HepG2 (cell line): ENCODE measurements at regions of chr17 and their contacts with region 1.

Region 1: GRCh38 chr17:60392042-60392844 is at the start of gene USP32:
- DNase-seq: peak; percentile 96
- ATAC-seq: peak; percentile 92
- H3K4me3 ChIP-seq: peak within 1 kb of the TSS; percentile 90 to 100 (median 90)
- H3K27ac ChIP-seq: peak within 1 kb of the TSS; percentile 95
- H3K4me1 ChIP-seq: peaks cover 42% of the 10 kb centered on the region
- H3K27me3 ChIP-seq: no peaks in the 10 kb centered on the region; a peak in 1 of 5 replicates
- CTCF ChIP-seq: peak; percentile 47
- EP300 ChIP-seq: peak in 1 of 2 experiments; percentile 66; a peak in 3 of 4 replicates
- POLR2A ChIP-seq: peak; percentile 77 to 83
- RAD21 ChIP-seq: peak; percentile 63; the same call in 1 of the 2 replicates
- total RNA-seq, gene USP32: 39.9 and 52.9 TPM in 2 replicates

Region 2: DNA sequence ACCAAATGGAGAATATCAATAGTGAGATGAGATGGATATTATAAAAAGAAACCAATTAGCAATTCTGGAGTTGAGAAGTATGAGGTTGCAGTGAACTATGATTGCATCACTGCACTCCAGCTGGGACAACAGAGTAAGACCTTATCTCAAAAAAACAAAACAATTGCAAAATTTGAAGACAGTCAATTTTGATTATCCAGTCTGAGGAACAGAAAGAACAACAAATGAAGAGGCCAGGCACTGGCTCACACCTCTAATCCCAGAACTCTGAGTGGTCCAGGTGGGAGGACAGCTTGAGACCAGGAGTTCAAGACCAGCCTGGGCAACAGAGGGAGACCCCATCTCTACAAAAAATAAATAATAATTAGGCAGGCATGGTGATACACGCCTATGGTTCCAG is 35.3 kb before region 1 on chr17:
- CTCF ChIA-PET with region 1: no interaction called
- POLR2A ChIA-PET with region 1: interaction called, 15 read pairs
- in situ Hi-C with region 1: no loop called
- intact Hi-C with region 1: loop called (anchors 2 kb)
- DNase-seq: no peak
- ATAC-seq: no peak
- H3K4me3 ChIP-seq: no peak overlapping the region
- H3K27ac ChIP-seq: no peak overlapping the region
- H3K4me1 ChIP-seq: peaks cover 37% of the 10 kb centered on the region
- H3K27me3 ChIP-seq: no peaks in the 10 kb centered on the region
- CTCF ChIP-seq: no peak
- EP300 ChIP-seq: no peak
- POLR2A ChIP-seq: no peak
- RAD21 ChIP-seq: no peak

Region 3: DNA sequence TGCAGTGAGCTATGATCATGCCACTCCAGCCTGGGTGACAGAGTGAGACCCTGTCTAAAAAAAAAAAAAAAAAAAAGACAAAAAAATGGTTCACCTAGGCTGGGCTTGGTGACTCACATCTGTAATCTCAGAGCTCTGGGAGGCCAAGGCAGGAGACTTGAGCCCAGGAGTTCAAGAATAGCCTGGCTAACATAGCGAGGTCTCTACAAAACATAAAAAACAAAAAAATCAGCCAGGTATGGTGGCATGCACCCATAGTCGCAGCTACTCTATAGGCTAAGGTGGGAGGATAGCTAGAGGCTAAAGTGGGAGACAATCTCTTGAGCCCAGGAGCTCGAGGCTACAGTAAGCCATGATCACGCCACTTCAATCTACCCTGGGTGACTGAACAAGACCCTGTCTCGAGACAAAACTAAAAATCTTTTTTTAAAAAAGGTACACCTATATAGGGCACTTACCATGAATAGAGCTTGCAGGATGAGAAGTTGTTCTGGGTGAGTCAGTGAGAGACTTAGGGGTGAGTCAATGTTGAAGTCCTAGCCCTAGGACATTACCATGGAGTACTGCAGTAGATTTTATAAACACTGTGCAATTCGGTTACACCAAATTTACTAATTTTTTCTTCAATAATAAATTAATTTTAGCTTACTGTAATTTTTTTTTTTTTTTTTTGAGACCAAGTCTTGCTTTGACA is 19.3 kb before region 1 on chr17:
- CTCF ChIA-PET with region 1: no interaction called
- POLR2A ChIA-PET with region 1: interaction called, 14 read pairs
- in situ Hi-C with region 1: no loop called
- intact Hi-C with region 1: no loop called
- DNase-seq: no peak
- ATAC-seq: peak; percentile 62
- H3K4me3 ChIP-seq: no peak overlapping the region
- H3K27ac ChIP-seq: no peak overlapping the region
- H3K4me1 ChIP-seq: peaks cover 19% of the 10 kb centered on the region
- H3K27me3 ChIP-seq: no peaks in the 10 kb centered on the region
- CTCF ChIP-seq: no peak
- EP300 ChIP-seq: no peak
- POLR2A ChIP-seq: no peak
- RAD21 ChIP-seq: no peak

Region 4: DNA sequence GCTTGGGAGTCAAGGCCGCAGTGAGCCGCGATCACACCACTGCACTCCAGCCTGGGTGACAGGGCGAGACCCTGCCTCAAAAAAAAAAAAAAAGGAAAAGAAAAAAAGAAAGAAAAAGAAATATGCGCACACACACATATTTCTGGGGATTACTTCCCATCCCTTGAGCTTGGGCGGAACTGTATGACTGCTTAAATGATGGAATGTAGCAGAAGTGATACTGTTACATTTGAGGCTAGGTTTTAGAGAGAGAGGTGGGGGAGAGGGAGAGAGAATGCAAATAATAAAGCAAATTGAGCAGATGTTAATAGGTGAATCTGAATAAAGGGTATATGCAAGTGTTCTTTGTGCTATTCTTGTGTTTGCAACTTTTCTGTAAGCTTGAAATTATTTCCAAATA is 11.7 kb after region 1 on chr17:
- CTCF ChIA-PET with region 1: no interaction called
- POLR2A ChIA-PET with region 1: interaction called, 30 read pairs
- in situ Hi-C with region 1: no loop called
- intact Hi-C with region 1: no loop called
- DNase-seq: no peak
- ATAC-seq: no peak
- H3K4me3 ChIP-seq: no peak overlapping the region
- H3K27ac ChIP-seq: no peak overlapping the region
- H3K4me1 ChIP-seq: peaks cover 30% of the 10 kb centered on the region
- H3K27me3 ChIP-seq: no peaks in the 10 kb centered on the region
- CTCF ChIP-seq: no peak
- EP300 ChIP-seq: no peak
- POLR2A ChIP-seq: no peak
- RAD21 ChIP-seq: no peak

Region 5: DNA sequence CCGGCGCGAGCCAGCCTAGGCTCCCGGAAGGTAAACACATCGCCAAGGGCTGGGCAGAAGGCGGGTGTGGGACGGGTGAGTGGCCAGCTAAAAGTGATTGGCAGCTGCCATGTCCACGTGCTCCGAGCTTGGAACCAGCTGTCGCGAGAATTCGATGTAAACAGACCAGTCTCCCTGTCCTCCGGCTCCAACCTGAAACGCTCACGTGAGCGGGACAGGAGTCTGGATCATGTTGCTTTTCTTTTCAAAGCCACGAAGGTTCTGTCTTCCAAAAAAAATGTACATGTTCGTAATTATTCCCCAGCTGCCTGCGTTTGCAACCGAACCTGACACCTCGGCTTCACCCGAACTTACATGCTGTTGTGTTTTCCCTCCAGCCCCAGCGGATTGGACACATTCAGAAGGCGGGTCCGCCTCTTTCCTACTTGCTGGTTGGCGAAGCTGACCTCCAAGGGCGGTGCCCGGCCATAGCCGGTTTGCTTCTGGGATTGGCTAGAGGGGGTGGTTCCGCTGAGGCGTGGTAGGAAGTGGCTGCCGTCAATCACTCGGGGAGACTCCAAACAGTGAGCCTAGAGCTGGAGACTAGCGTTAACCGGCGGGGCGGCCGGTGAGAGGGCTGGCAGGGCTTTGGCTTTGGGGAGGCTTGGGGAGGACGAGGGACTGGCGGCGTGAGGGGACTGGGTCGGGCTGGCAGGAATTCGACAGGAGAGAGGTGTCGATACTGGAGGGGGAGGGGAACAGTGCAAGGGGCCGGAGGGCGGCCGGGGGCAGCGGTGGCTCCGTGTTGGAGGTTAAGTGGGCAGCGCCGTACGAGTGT is 285.3 kb after region 1 on chr17 and contains the start of gene BCAS3:
- CTCF ChIA-PET with region 1: no interaction called
- POLR2A ChIA-PET with region 1: interaction called, 10 read pairs
- in situ Hi-C with region 1: no loop called
- intact Hi-C with region 1: no loop called
- DNase-seq: peak; percentile 100
- ATAC-seq: peak; percentile 98
- H3K4me3 ChIP-seq: peak within 1 kb of the TSS; percentile 68 to 77 (median 75)
- H3K27ac ChIP-seq: peak within 1 kb of the TSS; percentile 56
- H3K4me1 ChIP-seq: peaks cover 7% of the 10 kb centered on the region
- H3K27me3 ChIP-seq: no peaks in the 10 kb centered on the region; a peak in 1 of 5 replicates
- CTCF ChIP-seq: peak; percentile 21; the same call in 1 of the 2 replicates
- EP300 ChIP-seq: 0 out of 4 replicates have a peak, but pooled peaks of 1 of the 2 experiments have one; percentile 44
- POLR2A ChIP-seq: peak; percentile 87 to 94
- RAD21 ChIP-seq: no peak
- total RNA-seq, gene BCAS3: 10.7 and 15.8 TPM in 2 replicates